Activated CD4-positive, alpha-beta T cell treated with anti-CD3 and anti-CD28 coated beads for 36 hours (primary cell): ENCODE measurements at regions of chr12 and their contacts with region 1.

Region 1: GRCh38 chr12:21501379-21501956 is at the starts of genes GOLT1B and RECQL:
- DNase-seq: peak; percentile 93
- ATAC-seq: peak; percentile 93
- H3K4me3 Mint-ChIP-seq: no peak within 1 kb of the TSS
- H3K27ac Mint-ChIP-seq: no peak within 1 kb of the TSS
- H3K4me1 Mint-ChIP-seq: peaks cover 44% of the 10 kb centered on the region
- H3K27me3 Mint-ChIP-seq: no peaks in the 10 kb centered on the region
- total RNA-seq, gene GOLT1B: 25.6 to 31.2 TPM
- total RNA-seq, gene RECQL: 64.4 to 92.8 TPM

Region 2: GRCh38 chr12:21438643-21439042 is 62.8 kb before region 1 on chr12:
- CTCF ChIA-PET with region 1: interaction called, 5 read pairs
- POLR2A ChIA-PET with region 1: no interaction called
- intact Hi-C with region 1: loop called (anchors 1 kb)
- DNase-seq: no peak
- ATAC-seq: no peak
- H3K4me3 Mint-ChIP-seq: peak overlapping the region; percentile 92
- H3K27ac Mint-ChIP-seq: peak overlapping the region; percentile 96
- H3K4me1 Mint-ChIP-seq: peaks cover 41% of the 10 kb centered on the region
- H3K27me3 Mint-ChIP-seq: no peaks in the 10 kb centered on the region

Region 3: GRCh38 chr12:21456291-21456780 is 45.1 kb before region 1 on chr12:
- CTCF ChIA-PET with region 1: no interaction called
- POLR2A ChIA-PET with region 1: no interaction called
- intact Hi-C with region 1: loop called (anchors 1 to 5 kb)
- DNase-seq: peak; percentile 59
- ATAC-seq: peak; percentile 84
- H3K4me3 Mint-ChIP-seq: no peak overlapping the region
- H3K27ac Mint-ChIP-seq: peak overlapping the region; percentile 74
- H3K4me1 Mint-ChIP-seq: peaks cover 42% of the 10 kb centered on the region
- H3K27me3 Mint-ChIP-seq: no peaks in the 10 kb centered on the region

Region 4: GRCh38 chr12:21657326-21658077 is 156.0 kb after region 1 on chr12 and contains the start of gene LDHB:
- CTCF ChIA-PET with region 1: interaction called, 4 read pairs
- POLR2A ChIA-PET with region 1: interaction called, 6 read pairs
- intact Hi-C with region 1: loop called (anchors 1 kb)
- DNase-seq: peak; percentile 97
- ATAC-seq: peak; percentile 97
- H3K4me3 Mint-ChIP-seq: peak within 1 kb of the TSS; percentile 81
- H3K27ac Mint-ChIP-seq: peak within 1 kb of the TSS; percentile 99
- H3K4me1 Mint-ChIP-seq: peaks cover 45% of the 10 kb centered on the region
- H3K27me3 Mint-ChIP-seq: no peaks in the 10 kb centered on the region
- total RNA-seq, gene LDHB: 918 to 1,852 TPM

Region 5: GRCh38 chr12:22046090-22046967 is 544.9 kb after region 1 on chr12 and contains the start of gene CMAS:
- CTCF ChIA-PET with region 1: no interaction called
- POLR2A ChIA-PET with region 1: no interaction called
- intact Hi-C with region 1: loop called (anchors 5 kb)
- DNase-seq: peak; percentile 90
- ATAC-seq: peak; percentile 88
- H3K4me3 Mint-ChIP-seq: peak within 1 kb of the TSS; percentile 82
- H3K27ac Mint-ChIP-seq: peak within 1 kb of the TSS; percentile 92
- H3K4me1 Mint-ChIP-seq: peaks cover 51% of the 10 kb centered on the region
- H3K27me3 Mint-ChIP-seq: no peaks in the 10 kb centered on the region
- total RNA-seq, gene CMAS: 33.5 to 52.1 TPM

Region 6: DNA sequence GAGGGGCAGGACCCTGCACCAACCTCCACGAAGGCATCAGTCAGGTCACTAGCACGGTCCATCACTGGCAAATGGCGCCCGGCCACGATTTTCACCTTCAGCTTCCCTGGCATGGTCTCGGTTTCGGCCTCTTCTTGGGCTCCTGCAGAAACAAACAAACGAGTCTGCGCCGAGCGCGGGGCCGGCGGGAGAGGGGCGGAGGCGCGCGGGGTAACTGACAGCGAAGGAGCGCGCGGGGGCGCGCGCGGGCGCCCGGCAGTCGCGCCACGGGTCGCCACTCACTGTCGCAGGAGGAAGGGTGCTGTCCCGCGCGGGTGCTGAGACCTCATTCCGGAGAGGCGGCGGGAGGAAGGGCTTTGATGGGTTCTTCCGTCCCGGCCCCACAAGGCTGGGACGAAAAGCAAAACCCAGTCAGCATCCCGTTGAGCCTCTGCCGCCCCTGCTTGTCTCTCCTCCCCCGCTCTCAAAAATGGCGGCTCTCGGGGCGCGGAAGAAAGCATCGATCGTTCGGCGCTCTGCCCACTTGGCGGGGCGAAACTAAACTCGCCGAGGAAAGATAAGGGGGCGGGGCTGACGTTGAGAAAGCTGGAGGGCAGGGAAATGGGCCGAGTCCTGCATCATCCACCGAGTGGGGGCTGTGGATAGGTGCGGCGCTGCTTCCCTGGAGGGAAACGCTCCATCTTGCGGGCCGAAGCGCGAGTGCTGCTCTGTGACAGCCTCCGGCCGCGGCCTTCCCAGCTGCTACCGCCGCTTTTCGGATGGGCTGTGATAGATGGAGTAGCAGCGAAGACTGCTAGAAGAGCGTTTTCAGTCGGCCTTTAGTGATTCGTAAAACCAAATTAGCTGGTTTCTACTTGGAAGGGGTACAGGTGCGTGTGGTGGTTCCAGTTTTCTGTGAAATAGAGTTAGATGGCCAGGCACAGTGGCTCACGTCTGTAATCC is 1042.8 kb after region 1 on chr12 and contains the start of gene C2CD5:
- CTCF ChIA-PET with region 1: no interaction called
- POLR2A ChIA-PET with region 1: no interaction called
- intact Hi-C with region 1: loop called (anchors 2 to 5 kb)
- DNase-seq: peak; percentile 97
- ATAC-seq: peak; percentile 88
- H3K4me3 Mint-ChIP-seq: peak within 1 kb of the TSS; percentile 96
- H3K27ac Mint-ChIP-seq: peak within 1 kb of the TSS; percentile 94
- H3K4me1 Mint-ChIP-seq: peaks cover 36% of the 10 kb centered on the region
- H3K27me3 Mint-ChIP-seq: peaks cover 4% of the 10 kb centered on the region
- total RNA-seq, gene C2CD5: 29.5 to 31.6 TPM

Region 7: DNA sequence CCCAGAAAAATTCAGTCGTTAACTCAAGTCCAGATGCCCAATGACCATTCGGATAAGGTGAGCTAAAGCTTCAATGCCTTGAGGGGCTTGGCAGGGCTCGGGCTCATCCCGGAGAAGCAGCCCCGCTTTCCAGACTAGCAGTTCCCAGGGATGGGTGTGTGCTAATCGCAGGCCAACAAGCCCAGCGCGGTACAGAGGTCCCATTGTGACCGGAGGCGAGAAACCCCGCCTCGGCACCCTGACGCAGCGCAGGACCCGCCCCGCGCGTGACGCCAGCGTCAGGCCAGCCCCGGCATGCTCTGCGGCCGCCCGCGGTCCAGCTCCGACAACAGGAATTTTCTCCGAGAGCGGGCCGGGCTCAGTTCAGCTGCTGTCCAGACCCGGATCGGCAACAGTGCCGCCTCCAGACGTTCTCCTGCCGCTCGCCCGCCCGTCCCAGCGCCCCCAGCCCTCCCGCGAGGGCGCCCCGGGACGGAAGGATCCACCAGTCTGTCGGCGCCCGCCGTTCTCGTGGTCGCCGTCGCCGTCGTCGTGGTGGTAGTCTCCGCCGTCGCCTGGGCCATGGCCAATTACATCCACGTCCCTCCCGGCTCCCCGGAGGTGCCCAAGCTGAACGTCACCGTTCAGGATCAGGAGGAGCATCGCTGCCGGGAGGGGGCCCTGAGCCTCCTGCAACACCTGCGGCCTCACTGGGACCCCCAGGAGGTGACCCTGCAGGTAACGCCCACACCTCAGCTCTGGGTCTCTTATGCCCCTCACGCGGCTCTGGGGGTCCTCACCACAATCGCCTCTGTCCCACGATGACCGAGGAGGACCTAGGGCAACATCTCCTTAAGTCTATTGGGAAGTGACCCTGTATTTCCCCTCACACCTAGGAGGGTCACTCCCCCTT is 1123.6 kb after region 1 on chr12 and contains the start of gene ETNK1:
- CTCF ChIA-PET with region 1: no interaction called
- POLR2A ChIA-PET with region 1: no interaction called
- intact Hi-C with region 1: loop called in 1 of 2 experiments (anchors 2 kb)
- DNase-seq: peak; percentile 92
- ATAC-seq: peak; percentile 98
- H3K4me3 Mint-ChIP-seq: peak within 1 kb of the TSS; percentile 96
- H3K27ac Mint-ChIP-seq: peak within 1 kb of the TSS; percentile 98
- H3K4me1 Mint-ChIP-seq: peaks cover 32% of the 10 kb centered on the region
- H3K27me3 Mint-ChIP-seq: peaks cover 4% of the 10 kb centered on the region
- total RNA-seq, gene ETNK1: 38.6 to 62.1 TPM